Endothelial cell of umbilical vein (primary cell): ENCODE measurements at regions of chr2 and their contacts with region 1.

Region 1: GRCh38 chr2:204691911-204692510 is 146.7 kb downstream of the PARD3B start:
- DNase-seq: peak; percentile 90
- H3K4me3 ChIP-seq: no peak overlapping the region
- H3K27ac ChIP-seq: peak overlapping the region; percentile 36
- H3K4me1 ChIP-seq: peaks cover 18% of the 10 kb centered on the region
- H3K27me3 ChIP-seq: no peaks in the 10 kb centered on the region
- CTCF ChIP-seq: peak; percentile 68 to 72
- POLR2A ChIP-seq: no peak

Region 2: DNA sequence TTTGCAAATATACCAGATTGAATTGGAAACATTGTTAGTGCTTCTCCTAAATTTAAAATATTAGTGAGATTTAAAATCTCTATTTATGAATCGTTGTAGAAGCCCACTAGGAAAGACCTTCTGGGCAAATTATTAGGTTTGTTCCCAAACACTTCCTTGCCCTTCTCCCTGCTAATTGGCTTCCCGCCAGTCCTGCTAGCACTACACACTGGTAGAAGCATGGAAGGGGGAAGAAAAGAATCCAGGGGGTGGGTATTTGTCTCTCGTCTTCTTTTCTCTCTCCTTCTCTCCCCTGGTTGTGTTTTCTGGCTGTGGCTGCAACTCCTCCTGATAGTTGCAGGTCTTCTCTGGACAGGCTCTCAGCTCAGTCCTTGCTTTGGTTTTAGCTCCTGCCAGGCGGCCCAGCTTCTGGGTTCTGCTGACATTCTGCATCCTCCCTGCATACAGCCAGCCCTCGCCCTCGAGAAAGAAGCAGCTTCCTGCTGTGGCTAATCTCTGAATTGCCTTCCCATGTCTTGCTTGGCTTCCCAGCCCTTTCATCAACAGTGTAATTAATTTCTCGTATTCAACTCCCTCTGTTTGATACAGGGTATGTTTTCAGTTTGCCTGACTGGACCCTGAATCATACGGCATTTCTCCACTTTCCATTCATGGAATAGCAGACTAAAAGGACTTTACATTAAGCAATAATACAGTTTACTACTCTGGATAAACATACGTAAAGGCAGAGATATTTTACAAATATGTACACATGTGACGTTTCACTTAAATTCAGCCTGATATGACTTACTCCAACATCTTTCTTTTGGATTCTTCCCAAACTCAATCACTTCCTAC is 153.6 kb before region 1 on chr2:
- CTCF ChIA-PET with region 1: interaction called, 16 read pairs
- POLR2A ChIA-PET with region 1: no interaction called
- dilution Hi-C with region 1: no loop called
- intact Hi-C with region 1: no loop called
- DNase-seq: peak; percentile 93
- H3K4me3 ChIP-seq: peak overlapping the region in 2 of 3 experiments; percentile 6 to 51
- H3K27ac ChIP-seq: peak overlapping the region; percentile 81
- H3K4me1 ChIP-seq: peaks cover 32% of the 10 kb centered on the region
- H3K27me3 ChIP-seq: no peaks in the 10 kb centered on the region
- CTCF ChIP-seq: no peak
- POLR2A ChIP-seq: no peak

Region 3: GRCh38 chr2:204673877-204674276 is 18.1 kb before region 1 on chr2:
- CTCF ChIA-PET with region 1: interaction called, 26 read pairs
- POLR2A ChIA-PET with region 1: no interaction called
- dilution Hi-C with region 1: no loop called
- intact Hi-C with region 1: no loop called
- DNase-seq: peak; percentile 69
- H3K4me3 ChIP-seq: no peak overlapping the region
- H3K27ac ChIP-seq: peak overlapping the region; percentile 83
- H3K4me1 ChIP-seq: peaks cover 56% of the 10 kb centered on the region
- H3K27me3 ChIP-seq: no peaks in the 10 kb centered on the region
- CTCF ChIP-seq: no peak
- POLR2A ChIP-seq: no peak

Region 4: GRCh38 chr2:204705243-204705932 is 13.4 kb after region 1 on chr2:
- CTCF ChIA-PET with region 1: interaction called, 13 read pairs
- POLR2A ChIA-PET with region 1: no interaction called
- dilution Hi-C with region 1: no loop called
- intact Hi-C with region 1: no loop called
- DNase-seq: no peak
- H3K4me3 ChIP-seq: no peak overlapping the region
- H3K27ac ChIP-seq: no peak overlapping the region
- H3K4me1 ChIP-seq: no peaks in the 10 kb centered on the region
- H3K27me3 ChIP-seq: no peaks in the 10 kb centered on the region
- CTCF ChIP-seq: no peak
- POLR2A ChIP-seq: no peak

Region 5: DNA sequence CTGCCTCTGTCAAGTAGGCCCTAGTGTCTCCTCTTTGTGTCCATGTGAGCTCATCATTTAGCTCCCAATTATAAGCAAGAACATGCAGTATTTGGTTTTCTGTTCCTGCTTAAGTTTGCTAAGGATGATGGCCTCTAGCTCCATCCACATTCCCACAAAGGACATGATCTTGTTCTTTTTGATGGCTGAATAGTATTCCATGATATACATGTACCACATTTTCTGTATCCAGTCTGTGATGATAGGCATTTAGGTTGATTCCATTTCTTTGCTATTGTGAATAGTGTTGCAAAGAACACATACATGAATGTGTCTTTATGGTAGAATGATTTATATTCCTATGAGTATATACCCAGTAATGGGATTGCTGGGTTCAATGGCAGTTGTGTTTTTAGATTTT is 116.5 kb after region 1 on chr2:
- CTCF ChIA-PET with region 1: no interaction called
- POLR2A ChIA-PET with region 1: no interaction called
- dilution Hi-C with region 1: no loop called
- intact Hi-C with region 1: no loop called
- DNase-seq: no peak
- H3K4me3 ChIP-seq: no peak overlapping the region
- H3K27ac ChIP-seq: no peak overlapping the region
- H3K4me1 ChIP-seq: no peaks in the 10 kb centered on the region
- H3K27me3 ChIP-seq: no peaks in the 10 kb centered on the region
- CTCF ChIP-seq: no peak
- POLR2A ChIP-seq: no peak

Region 6: DNA sequence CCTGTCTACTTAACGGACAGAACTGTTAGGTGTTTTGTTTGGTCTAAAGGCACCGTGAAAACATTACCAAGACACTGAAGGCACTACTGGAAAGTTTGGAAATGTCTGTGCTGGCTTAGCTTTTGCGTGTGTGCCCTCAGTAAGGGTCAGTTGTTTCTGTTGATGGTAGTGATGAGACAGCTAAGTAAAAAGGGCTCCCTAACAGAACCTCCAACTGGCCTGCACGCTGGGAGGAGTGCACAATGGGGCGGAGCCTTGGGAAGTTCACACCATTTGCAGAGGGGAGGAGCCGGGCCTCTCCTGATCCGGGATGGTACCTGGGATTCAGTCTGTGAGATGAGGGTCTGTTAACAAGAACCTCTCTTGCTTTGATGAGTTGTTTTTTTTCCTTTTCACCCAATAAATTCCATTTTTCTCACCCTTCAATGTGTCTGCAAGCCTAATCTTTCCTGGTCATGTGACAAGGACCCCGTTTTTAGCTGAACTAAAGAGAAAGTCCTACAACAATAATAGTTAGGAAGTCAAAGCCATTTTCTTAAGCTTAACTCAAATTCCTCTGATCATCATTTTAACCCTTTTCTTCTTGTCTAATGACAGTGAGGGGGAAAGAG is 221.9 kb after region 1 on chr2:
- CTCF ChIA-PET with region 1: no interaction called
- POLR2A ChIA-PET with region 1: no interaction called
- dilution Hi-C with region 1: no loop called
- intact Hi-C with region 1: no loop called
- DNase-seq: no peak
- H3K4me3 ChIP-seq: no peak overlapping the region
- H3K27ac ChIP-seq: no peak overlapping the region
- H3K4me1 ChIP-seq: no peaks in the 10 kb centered on the region
- H3K27me3 ChIP-seq: no peaks in the 10 kb centered on the region
- CTCF ChIP-seq: no peak
- POLR2A ChIP-seq: no peak